ENCODE measurements at regions of chr16 and their contacts with region 1.

Region 1: DNA sequence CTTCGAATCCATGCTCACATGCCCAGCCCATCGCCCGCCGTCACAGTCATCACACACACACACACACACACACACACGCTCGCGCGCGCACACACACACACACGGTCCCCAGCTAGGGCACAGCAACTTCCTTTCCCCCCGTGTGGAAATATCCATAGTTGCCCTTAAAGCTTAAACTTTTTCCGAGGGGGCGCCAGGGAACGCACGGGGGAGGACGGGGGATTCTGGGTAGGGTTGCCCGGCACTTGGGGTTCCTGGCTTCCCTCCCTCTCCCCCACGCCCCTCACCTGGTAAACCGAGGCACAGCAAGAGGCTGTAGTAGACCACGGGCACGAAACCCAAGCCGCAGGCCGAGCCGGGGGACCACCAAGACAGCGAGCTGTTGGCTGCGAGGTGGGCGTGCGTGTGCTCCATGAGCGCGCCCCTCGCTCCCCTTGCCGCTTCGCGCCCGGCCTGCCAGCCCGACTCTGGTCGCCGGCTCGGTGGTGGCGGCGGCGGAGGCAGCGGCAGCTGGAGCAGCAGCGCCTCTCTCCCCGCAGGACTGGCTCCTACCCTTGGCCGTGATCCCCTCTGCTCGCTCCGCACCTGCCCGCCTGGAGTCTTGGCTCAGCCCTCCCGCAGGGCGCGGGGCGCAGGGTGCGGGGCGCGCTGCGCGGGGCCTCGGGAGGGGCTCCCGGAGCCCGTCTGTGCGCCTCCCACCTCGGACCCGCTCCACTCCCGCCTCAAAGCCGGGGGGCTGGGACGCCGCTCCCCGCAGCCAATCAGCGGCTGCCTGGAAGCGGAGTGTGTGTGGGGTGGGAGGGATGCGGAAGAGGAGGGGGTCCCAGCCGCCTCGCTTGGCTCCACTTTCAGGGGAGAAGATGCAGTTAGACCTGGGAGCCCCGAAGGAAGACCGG is at the start of gene GPR139:
- DNase-seq: no peak
- H3K4me3 ChIP-seq: no peak within 1 kb of the TSS
- H3K27ac ChIP-seq: no peak within 1 kb of the TSS
- H3K4me1 ChIP-seq: no peaks in the 10 kb centered on the region
- H3K27me3 ChIP-seq: peaks cover 4% of the 10 kb centered on the region
- CTCF ChIP-seq: no peak
- total RNA-seq, gene GPR139: not detected

Region 2: DNA sequence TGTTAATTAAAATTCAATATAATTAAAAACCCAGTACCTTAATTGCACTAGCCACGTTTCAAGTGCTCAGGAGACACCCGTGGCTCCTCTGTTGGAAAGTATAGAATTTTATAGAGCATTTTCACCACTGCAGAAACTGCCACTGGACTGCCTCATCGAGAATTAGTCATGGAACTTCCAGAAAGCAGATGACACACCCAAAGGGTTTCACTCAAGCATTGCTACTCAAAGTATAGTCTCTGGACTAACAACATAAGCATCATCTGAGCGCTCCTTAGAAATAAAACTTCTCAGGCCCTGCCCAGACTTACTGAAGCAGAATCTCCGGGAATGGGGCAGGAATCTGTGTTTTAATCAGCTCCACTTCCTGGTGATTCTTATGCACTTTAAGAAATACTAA is 63.7 kb after region 1 on chr16:
- CTCF ChIA-PET with region 1: no interaction called
- dilution Hi-C with region 1: loop called (anchors 10 kb)
- in situ Hi-C with region 1: no loop called
- intact Hi-C with region 1: no loop called
- DNase-seq: peak; percentile 6
- H3K4me3 ChIP-seq: no peak overlapping the region
- H3K27ac ChIP-seq: no peak overlapping the region
- H3K4me1 ChIP-seq: no peaks in the 10 kb centered on the region
- H3K27me3 ChIP-seq: no peaks in the 10 kb centered on the region
- CTCF ChIP-seq: no peak

Measured in mammary epithelial cell (primary cell).